Psoas muscle (tissue), 8 donors: ENCODE measurements at regions of chr11 and their contacts with region 1.

Region 1: DNA sequence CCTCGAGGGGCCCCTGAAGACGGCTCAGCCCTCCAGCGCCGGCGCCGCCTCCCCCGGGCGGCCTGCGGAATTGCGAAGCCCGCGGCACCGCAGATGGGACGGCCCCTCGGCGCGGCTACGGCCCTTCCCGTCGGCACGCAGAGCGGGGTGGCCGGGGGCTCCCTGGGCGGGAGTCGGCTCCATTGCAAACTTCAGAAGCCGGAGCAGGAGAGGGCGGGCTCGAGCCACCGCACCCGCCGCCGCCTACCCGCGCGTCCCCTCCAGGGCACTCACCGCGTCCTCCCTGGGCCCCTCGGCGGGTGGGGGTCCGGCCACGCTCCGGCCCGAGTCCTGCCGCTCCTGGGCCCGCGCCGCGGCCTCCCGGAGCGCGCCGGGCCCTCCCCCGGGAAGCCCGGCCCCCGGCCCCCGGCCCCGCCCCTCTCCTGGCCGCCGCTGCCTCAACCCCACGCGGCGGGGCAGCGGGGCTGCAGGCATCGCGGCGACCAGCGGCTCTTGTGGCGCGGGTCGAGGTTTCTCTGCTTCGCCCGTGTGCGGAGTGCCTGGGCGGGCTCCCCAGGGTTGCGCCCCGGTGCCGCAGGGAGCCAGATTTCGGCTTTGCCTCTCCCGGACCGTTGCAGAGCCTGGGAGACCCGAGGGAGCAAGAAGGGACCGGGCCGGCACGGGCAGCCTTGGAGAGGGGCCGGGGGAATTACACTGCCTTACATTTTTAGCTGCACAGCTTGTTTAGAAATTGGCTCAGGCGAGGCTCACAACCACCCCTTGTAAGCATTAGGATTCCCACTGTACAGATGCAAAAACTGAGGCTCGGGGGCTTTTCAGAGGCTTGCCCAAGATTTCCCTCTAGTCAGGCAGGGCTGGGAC is at the start of gene PACSIN3:
- DNase-seq: peak; percentile 74 to 83
- ATAC-seq: peak; percentile 34 to 42 (median 37)
- H3K4me3 ChIP-seq: peak within 1 kb of the TSS; percentile 93
- H3K27ac ChIP-seq: peak within 1 kb of the TSS; percentile 95
- H3K4me1 ChIP-seq: peaks cover 40% of the 10 kb centered on the region
- H3K27me3 ChIP-seq: no peaks in the 10 kb centered on the region
- CTCF ChIP-seq: peak; percentile 9
- total RNA-seq, gene PACSIN3: 210 to 430 (median 348) TPM

Region 2: DNA sequence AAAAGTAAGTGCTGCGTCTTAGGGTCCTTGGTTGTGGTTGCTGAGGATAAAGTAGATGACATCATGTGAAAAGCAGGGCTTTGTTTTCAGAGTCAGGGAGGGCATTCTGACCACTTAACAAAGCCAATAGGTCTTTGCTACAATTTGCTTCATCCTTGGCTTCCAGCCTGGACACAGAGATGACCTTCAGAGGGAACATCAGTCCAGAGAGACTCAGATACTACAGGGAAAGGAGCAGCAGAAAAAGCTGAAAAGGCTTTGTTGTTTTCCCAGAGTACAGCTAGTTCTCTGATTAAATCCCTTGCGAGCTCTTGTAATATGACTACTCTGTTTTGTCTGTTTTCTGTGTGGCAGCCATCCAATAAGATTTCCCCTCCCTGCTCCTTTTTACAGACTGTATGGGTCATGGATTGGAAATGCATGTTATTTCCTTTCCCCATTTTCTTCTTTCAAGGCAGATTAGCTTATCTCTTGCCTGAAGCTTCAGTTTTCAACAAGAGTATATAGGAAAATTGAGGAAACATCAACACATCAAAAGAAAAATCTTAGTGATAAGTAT is 537.0 kb before region 1 on chr11:
- intact Hi-C with region 1: no loop called
- DNase-seq: peak in 1 of 2 donors; percentile 36
- ATAC-seq: peak; percentile 47 to 86 (median 84)
- H3K4me3 ChIP-seq: no peak overlapping the region
- H3K27ac ChIP-seq: peak overlapping the region; percentile 63
- H3K4me1 ChIP-seq: peaks cover 14% of the 10 kb centered on the region
- H3K27me3 ChIP-seq: no peaks in the 10 kb centered on the region
- CTCF ChIP-seq: no peak

Region 3: DNA sequence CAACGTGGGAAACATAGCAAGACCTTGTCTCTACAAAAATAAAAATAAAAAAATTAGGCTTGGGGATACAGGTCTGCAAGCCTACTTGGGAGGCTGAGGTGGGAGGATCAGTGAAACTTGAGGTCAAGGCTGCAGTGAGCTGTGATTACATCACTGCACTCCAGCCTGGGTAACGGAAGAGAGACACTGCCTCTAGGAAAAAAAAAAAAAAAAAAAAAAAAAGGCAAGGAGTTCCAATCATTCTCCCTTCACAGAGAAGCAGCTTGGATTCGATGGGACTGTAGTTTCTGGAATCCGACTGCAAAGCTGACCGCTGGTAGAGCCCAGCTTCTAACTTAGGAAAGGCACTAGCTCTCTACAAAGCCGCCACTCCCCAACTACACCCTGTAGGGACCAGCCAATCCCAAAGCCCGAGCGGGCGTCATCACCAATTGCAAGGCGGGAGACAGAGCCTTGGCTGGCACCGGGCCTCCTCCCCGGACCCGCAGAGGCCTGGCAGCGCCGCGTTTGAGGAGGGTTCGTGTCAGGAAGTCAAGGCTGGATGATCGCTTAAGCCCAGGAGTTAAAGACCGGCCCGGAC is 27.8 kb after region 1 on chr11:
- intact Hi-C with region 1: loop called in 1 of 2 experiments (anchors 2 kb)
- DNase-seq: peak; percentile 93 to 96
- ATAC-seq: peak; percentile 93 to 95 (median 94)
- H3K4me3 ChIP-seq: peak overlapping the region; percentile 83
- H3K27ac ChIP-seq: peak overlapping the region; percentile 92
- H3K4me1 ChIP-seq: peaks cover 23% of the 10 kb centered on the region
- H3K27me3 ChIP-seq: no peaks in the 10 kb centered on the region
- CTCF ChIP-seq: no peak

Region 4: DNA sequence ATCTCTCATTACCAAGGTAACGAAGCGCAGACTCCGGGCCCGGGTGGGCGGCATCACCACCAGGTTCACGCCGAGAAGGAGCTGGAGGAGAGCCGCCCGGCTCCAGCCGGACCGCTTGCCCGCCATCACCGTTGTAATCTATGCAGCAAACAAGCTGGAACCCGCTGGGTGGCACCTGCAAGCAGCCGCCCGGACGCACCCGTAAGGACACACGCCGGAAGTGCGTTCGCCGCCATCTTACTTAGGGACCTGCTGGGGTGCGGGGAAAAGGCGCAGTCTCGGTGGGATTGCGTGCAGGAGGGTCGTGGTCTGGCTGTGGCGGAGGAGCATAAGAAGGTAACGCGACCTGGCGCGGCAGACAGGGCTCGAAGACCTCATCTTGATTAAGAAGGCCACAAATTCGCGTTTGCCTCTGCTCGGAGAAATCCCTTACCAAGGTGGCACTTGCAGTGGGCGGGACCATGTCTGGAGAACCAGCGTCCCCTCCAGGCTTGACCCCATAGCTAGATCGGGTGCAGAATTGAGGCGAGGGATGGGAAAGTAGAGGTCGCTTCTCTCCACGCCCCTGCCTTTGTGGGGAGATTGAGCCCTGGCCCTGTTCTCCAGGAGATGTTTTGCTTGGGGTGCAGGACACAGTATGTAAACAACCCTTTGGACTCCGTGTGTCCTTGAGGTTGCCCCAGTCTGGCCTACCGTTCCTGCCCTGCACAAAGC is 62.5 kb after region 1 on chr11 and contains the start of gene ACP2:
- intact Hi-C with region 1: loop called in 1 of 2 experiments (anchors 5 kb)
- DNase-seq: peak; percentile 88 to 94
- ATAC-seq: peak; percentile 97 to 99 (median 98)
- H3K4me3 ChIP-seq: peak within 1 kb of the TSS; percentile 66
- H3K27ac ChIP-seq: peak within 1 kb of the TSS; percentile 89
- H3K4me1 ChIP-seq: peaks cover 16% of the 10 kb centered on the region
- H3K27me3 ChIP-seq: no peaks in the 10 kb centered on the region
- CTCF ChIP-seq: no peak
- total RNA-seq, gene ACP2: 7.1 to 17.8 (median 15.3) TPM